ENCODE measurements at regions of chrX and their contacts with region 1.

Region 1: GRCh38 chrX:48957827-48958634 is 624 bp upstream of the OTUD5 start:
- DNase-seq: peak; percentile 92 to 98 (median 96)
- H3K4me3 ChIP-seq: peak overlapping the region; percentile 47 to 75
- H3K4me3 Mint-ChIP-seq: peak overlapping the region; percentile 96 to 99 (median 98)
- H3K27ac ChIP-seq: peak overlapping the region; percentile 98
- H3K27ac Mint-ChIP-seq: peak overlapping the region; percentile 98 to 100 (median 100)
- H3K4me1 ChIP-seq: peaks cover 49% of the 10 kb centered on the region
- H3K4me1 Mint-ChIP-seq: peaks cover 14 to 64% (median 38%) of the 10 kb centered on the region in 4 donors
- H3K27me3 ChIP-seq: no peaks in the 10 kb centered on the region
- H3K27me3 Mint-ChIP-seq: no peaks in the 10 kb centered on the region

Region 2: GRCh38 chrX:48676106-48676892 is 281.7 kb before region 1 on chrX:
- CTCF ChIA-PET with region 1: no interaction called
- POLR2A ChIA-PET with region 1: interaction called, 3 read pairs
- intact Hi-C with region 1: loop called (anchors 1 kb)
- DNase-seq: peak; percentile 87 to 88 (median 88)
- H3K4me3 ChIP-seq: peak overlapping the region; percentile 36 to 69
- H3K4me3 Mint-ChIP-seq: peak overlapping the region; percentile 89 to 93 (median 92)
- H3K27ac ChIP-seq: peak overlapping the region; percentile 78
- H3K27ac Mint-ChIP-seq: peak overlapping the region; percentile 77 to 96 (median 94)
- H3K4me1 ChIP-seq: peaks cover 21% of the 10 kb centered on the region
- H3K4me1 Mint-ChIP-seq: peaks cover 8 to 25% (median 14%) of the 10 kb centered on the region in 4 donors
- H3K27me3 ChIP-seq: no peaks in the 10 kb centered on the region
- H3K27me3 Mint-ChIP-seq: no peaks in the 10 kb centered on the region

Region 3: GRCh38 chrX:48833542-48834138 is 124.4 kb before region 1 on chrX:
- CTCF ChIA-PET with region 1: no interaction called
- POLR2A ChIA-PET with region 1: no interaction called
- intact Hi-C with region 1: no loop called
- DNase-seq: no peak
- H3K4me3 ChIP-seq: no peak overlapping the region
- H3K4me3 Mint-ChIP-seq: peak overlapping the region in 5 of 8 donors; percentile 3 to 96 (median 77)
- H3K27ac ChIP-seq: no peak overlapping the region
- H3K27ac Mint-ChIP-seq: no peak overlapping the region
- H3K4me1 ChIP-seq: peaks cover 11% of the 10 kb centered on the region
- H3K4me1 Mint-ChIP-seq: peaks cover 9 to 23% (median 11%) of the 10 kb centered on the region in 4 donors
- H3K27me3 ChIP-seq: no peaks in the 10 kb centered on the region
- H3K27me3 Mint-ChIP-seq: peaks cover 10 to 16% of the 10 kb centered on the region in 2 donors

Region 4: DNA sequence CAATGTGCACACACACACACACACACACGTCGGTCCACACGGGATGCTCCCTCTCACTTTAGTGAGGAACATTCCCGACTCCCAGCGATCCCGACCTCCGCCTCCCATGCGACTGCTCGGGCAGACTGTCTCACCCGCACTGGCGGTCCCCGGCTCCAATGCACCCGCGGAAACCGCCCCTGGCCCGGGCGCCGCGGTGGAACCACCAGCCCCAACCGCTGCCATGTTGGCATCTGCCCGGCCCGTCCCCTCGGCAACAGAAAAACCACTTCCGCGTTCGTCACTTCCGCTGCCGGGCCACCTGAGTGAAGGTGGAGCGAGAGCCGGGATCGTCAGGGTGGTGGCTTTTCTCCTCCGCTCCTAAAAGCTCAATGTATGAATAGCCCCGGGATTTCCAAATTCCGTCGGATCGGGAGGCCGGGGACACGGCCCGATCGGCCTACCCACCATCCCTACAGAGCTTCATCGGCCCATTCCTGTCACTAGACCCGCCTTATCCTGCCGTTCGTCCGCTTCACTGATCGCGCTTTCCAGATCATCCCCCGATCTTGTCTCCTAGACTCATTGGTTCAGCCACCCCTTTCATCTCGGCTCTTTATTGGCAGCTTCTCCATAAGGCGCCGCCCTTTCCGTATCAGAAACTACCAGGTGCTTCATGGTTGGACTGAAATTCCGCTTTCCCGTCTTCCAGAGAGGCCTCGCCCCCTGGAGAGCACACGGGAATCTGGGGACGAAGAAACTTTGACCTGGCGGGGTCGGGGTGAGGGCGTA is 46.4 kb before region 1 on chrX and contains the start of gene SLC35A2:
- CTCF ChIA-PET with region 1: no interaction called
- POLR2A ChIA-PET with region 1: interaction called, 47 read pairs
- intact Hi-C with region 1: no loop called
- DNase-seq: peak; percentile 89 to 92 (median 90)
- H3K4me3 ChIP-seq: peak within 1 kb of the TSS; percentile 47 to 74
- H3K4me3 Mint-ChIP-seq: peak within 1 kb of the TSS; percentile 85 to 96 (median 92)
- H3K27ac ChIP-seq: peak within 1 kb of the TSS; percentile 76
- H3K27ac Mint-ChIP-seq: peak within 1 kb of the TSS; percentile 93 to 100 (median 98)
- H3K4me1 ChIP-seq: peaks cover 58% of the 10 kb centered on the region
- H3K4me1 Mint-ChIP-seq: peaks cover 26 to 62% (median 43%) of the 10 kb centered on the region in 4 donors
- H3K27me3 ChIP-seq: no peaks in the 10 kb centered on the region
- H3K27me3 Mint-ChIP-seq: no peaks in the 10 kb centered on the region
- total RNA-seq, gene SLC35A2: 13.8 to 15.8 TPM

Region 5: DNA sequence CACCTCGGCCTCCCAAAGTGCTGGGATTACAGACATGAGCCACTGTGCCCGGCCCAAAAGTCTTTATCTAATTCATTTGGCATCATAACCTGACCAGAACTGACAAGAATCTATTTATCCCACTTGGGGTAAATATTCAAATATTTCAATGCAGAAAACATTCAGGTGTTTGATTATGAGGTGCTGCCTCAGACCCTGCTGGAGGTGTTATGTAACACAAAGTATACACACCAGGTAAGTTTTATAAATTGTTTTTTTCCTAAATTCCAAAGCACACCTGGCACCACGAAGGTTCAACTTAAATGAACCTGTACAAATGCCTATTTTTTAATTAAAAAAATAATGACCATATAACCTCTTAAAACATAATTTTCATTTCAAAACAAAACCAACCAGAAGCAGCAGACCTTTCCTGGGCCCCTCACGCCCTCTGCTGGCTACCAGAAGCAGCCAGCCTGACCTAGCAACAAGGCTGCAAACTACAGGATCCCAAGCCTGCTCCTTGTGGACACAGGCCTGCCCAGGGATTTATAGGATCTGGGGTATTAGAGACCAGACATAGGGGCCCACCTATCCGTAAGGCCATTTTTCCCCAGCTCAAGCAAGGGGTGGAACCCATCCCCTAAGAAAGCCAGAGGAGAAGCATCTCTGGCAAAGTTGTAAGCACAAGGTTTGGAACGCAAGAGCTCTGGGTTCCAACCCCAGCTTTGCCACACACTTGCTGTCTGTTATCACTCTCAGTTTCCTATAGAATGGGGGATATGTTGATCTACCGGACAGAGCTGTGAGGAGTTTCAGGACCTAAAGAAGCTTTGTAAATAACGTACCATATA is 12.3 kb before region 1 on chrX:
- CTCF ChIA-PET with region 1: interaction called, 16 read pairs
- POLR2A ChIA-PET with region 1: interaction called, 99 read pairs
- intact Hi-C with region 1: no loop called
- DNase-seq: peak; percentile 45 to 66 (median 62)
- H3K4me3 ChIP-seq: no peak overlapping the region
- H3K4me3 Mint-ChIP-seq: peak overlapping the region in 6 of 8 donors; percentile 11 to 64 (median 26)
- H3K27ac ChIP-seq: no peak overlapping the region
- H3K27ac Mint-ChIP-seq: peak overlapping the region; percentile 66 to 92 (median 79)
- H3K4me1 ChIP-seq: peaks cover 70% of the 10 kb centered on the region
- H3K4me1 Mint-ChIP-seq: peaks cover 34 to 63% (median 48%) of the 10 kb centered on the region in 4 donors
- H3K27me3 ChIP-seq: no peaks in the 10 kb centered on the region
- H3K27me3 Mint-ChIP-seq: no peaks in the 10 kb centered on the region

Region 6: DNA sequence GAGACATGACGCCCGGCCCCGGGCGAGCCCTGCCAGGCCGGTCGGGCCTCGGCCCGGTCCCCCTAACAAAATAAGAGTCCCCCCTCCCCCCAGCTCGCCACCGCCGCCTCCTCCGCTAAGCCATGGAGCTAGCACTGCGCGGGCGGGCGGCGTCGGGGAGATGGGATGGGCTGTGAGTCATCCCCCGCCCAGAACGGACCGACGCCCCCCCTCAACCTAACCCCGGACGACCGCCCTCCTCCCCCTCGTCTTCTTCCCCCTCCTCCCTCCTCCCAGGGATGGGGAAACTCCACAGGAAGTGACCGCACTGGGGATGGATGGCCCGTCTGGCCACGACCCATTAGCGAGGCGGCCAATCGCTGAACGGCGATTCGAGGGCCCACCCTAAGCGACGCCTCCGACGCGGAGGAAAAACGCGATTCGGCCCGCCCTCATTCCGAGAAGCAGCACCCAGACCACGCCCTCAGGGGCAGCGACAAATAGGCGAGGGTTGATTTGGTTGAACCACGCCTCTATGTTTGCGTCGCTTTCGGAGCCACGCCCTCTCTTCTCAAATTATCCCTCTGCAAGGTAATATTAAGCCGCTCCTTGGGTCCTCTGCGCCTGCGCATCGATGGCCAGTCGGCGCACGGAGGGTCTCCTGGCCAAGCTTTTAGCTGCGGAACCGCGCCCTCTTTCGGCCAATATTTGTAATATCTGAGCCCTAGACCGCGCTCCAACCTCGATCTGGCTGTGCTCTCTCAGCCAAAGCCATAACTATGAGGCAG is 85.4 kb after region 1 on chrX and contains the start of gene TFE3:
- CTCF ChIA-PET with region 1: interaction called, 7 read pairs
- POLR2A ChIA-PET with region 1: interaction called, 19 read pairs
- intact Hi-C with region 1: loop called (anchors 1 kb)
- DNase-seq: peak; percentile 91 to 99 (median 96)
- H3K4me3 ChIP-seq: peak within 1 kb of the TSS in 1 of 2 donors; percentile 63
- H3K4me3 Mint-ChIP-seq: peak within 1 kb of the TSS; percentile 84 to 94 (median 89)
- H3K27ac ChIP-seq: peak within 1 kb of the TSS; percentile 93
- H3K27ac Mint-ChIP-seq: peak within 1 kb of the TSS; percentile 93 to 97 (median 96)
- H3K4me1 ChIP-seq: peaks cover 39% of the 10 kb centered on the region
- H3K4me1 Mint-ChIP-seq: peaks cover 18 to 47% (median 30%) of the 10 kb centered on the region in 4 donors
- H3K27me3 ChIP-seq: no peaks in the 10 kb centered on the region
- H3K27me3 Mint-ChIP-seq: no peaks in the 10 kb centered on the region
- total RNA-seq, gene TFE3: 35.5 to 37.6 TPM

Region 7: DNA sequence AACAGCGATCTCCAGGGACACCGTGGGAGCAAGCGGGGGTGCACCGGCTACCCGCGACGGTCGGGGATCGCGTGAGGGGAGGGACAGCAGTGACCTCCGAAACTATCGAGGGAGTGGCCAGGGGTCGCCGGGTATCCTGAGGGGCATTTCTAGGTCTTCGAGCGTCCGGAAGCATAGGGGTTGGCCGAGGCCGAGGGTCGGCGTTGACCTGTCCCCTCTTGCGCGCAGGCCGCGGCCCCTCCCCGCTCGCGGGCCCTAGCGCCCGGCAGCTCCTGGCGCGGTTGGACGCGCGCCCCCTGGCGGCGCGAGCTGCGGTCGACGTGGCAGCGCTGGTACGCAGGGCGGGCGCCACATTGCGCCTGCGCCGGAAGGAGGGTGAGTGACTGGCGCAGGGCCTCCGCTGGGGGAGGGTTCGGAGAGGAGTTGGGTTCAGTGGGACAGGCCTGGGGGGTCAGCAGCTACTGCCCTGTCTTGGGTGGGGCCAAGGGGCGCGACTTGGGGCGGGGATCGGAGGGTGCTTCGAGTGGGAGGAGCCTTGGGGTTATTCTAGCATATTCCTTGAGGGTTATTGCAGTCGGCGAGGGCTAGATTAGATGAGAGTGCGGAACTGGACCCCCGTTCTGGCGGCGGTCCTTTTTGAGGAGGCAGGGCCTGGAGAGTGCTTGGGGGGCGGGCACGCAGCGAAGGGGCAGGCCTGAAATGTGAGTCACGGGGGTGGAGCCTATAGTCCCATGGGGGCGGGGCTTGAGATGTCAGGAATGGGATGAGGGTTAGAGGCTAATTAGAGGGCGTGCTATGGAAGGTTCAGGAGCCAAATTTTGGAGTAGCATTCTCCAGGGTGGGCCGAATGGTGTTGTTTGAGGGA is 205.8 kb after region 1 on chrX:
- CTCF ChIA-PET with region 1: no interaction called
- POLR2A ChIA-PET with region 1: interaction called, 4 read pairs
- intact Hi-C with region 1: loop called (anchors 5 kb)
- DNase-seq: peak; percentile 81 to 84 (median 82)
- H3K4me3 ChIP-seq: peak overlapping the region in 1 of 2 donors; percentile 50
- H3K4me3 Mint-ChIP-seq: peak overlapping the region; percentile 70 to 88 (median 80)
- H3K27ac ChIP-seq: peak overlapping the region; percentile 58
- H3K27ac Mint-ChIP-seq: peak overlapping the region; percentile 83 to 95 (median 92)
- H3K4me1 ChIP-seq: peaks cover 41% of the 10 kb centered on the region
- H3K4me1 Mint-ChIP-seq: peaks cover 14 to 41% (median 29%) of the 10 kb centered on the region in 4 donors
- H3K27me3 ChIP-seq: no peaks in the 10 kb centered on the region
- H3K27me3 Mint-ChIP-seq: no peaks in the 10 kb centered on the region

Measured in CD4-positive, alpha-beta memory T cell (primary cell).